ENCODE measurements at regions of chr19 and their contacts with region 1.

Region 1: DNA sequence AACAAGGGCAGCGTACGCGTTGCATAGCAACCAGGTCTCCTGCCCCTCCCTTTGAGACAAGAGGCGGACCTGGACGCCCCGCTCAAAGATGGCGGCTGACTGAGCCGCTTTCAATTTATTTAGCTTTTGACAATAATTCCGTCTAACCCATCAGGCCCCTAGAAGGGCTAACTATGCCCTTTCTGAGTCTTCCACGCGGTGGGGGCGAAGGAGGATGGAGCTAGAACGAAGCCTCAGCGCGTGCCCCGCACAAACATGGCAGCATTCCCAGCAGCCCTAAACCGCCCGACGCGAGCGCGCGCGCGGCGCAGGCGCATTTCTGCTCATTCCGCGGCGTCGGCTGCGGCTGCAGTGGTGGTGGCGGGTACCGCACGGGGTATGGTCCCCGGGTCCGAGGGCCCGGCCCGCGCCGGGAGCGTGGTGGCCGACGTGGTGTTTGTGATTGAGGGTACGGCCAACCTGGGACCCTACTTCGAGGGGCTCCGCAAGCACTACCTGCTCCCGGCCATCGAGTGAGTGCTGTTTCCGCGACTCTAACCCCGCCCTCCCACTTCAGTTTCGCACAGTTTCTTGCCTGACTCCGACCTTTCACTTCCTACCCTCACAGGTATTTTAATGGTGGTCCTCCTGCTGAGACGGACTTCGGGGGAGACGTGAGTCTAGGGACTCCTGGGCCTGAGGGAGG is at the start of gene MED25:
- DNase-seq: peak; percentile 92
- ATAC-seq: peak; percentile 77
- total RNA-seq, gene MED25: 83.4 TPM

Region 2: DNA sequence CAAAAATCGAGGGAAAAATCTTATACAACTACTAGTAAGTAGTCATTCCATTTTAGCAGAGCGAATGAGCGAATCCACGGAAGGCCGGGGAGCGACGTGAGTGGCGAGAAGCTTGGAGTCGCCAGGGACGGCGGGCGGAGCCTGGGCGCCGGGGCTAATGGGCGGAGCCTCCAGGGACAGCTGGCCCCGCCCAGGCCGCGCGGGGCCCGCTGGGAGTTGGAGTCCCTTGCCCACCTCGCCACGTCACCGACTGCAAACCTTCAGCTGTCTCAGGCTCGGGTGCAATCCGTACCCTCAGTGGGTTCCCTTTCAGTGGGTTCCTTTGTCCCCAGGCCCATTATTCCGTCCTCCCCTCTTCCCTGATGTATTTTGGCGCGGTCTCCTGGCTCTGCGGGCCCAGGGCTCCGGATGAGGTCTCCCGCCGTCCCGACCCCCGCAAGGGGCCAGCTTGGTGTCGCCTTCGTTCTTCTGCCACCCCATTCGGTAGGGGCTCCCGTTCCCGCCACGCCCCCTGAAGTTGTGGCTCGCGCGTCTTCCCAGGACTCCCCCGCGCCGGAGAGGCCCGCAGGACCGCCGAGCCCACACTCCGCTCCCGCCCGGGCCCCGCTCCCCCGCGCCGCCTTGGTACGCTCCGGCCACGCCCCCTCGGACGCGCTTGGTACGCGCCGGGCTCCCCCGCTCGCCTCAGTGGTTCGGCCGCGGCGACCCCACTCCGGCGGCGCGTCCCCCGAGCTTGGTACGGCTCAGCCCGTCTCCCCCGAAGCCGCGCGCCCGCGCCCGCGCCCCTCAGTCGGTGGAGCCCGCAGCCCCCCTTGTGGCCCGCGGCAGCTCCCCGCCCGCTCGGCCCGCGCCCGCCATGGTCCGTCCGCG is 32.6 kb after region 1 on chr19 and contains the start of gene PTOV1:
- intact Hi-C with region 1: loop called (anchors 5 kb)
- DNase-seq: peak; percentile 96
- ATAC-seq: peak; percentile 96
- total RNA-seq, gene PTOV1: 120 TPM

Region 3: DNA sequence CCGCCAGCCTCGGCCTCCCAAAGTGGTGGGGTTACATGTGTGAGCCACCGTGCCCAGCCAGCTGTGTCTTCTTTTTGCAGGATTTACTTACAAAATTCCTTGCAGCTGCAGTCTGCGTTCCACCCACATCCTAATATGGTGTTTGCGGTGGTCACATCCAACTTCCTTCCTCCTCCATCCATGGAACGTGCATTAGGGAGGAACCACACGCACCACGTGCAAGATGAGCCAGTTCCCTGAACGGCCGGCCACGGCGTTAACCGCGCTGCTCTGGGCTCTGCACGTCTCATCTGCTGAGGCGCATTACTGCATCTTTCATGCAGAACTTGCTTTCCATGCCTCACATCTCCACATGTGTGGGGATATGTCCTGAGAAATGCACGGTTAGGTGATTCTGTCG is 155.9 kb after region 1 on chr19:
- intact Hi-C with region 1: no loop called
- DNase-seq: peak; percentile 70
- ATAC-seq: peak; percentile 40

Measured in Right ventricle myocardium superior (tissue), 1 donor.